Vagina (tissue), 2 donors: ENCODE measurements at regions of chr17 and their contacts with region 1.

Region 1: GRCh38 chr17:49952209-49952911 is 16.6 kb upstream of the DLX4 start:
- DNase-seq: no peak
- H3K4me3 ChIP-seq: no peak overlapping the region
- H3K27ac ChIP-seq: no peak overlapping the region
- H3K4me1 ChIP-seq: no peaks in the 10 kb centered on the region
- H3K27me3 ChIP-seq: no peaks in the 10 kb centered on the region
- CTCF ChIP-seq: peak; percentile 28 to 58 (median 45)
- POLR2A ChIP-seq: no peak

Region 2: GRCh38 chr17:49880291-49881053 is 71.9 kb before region 1 on chr17:
- intact Hi-C with region 1: loop called (anchors 5 kb)
- DNase-seq: no peak
- H3K4me3 ChIP-seq: peak overlapping the region in 1 of 2 donors; percentile 29
- H3K27ac ChIP-seq: no peak overlapping the region
- H3K4me1 ChIP-seq: no peaks in the 10 kb centered on the region
- H3K27me3 ChIP-seq: no peaks in the 10 kb centered on the region
- CTCF ChIP-seq: peak; percentile 70 to 84 (median 76)
- POLR2A ChIP-seq: no peak

Region 3: DNA sequence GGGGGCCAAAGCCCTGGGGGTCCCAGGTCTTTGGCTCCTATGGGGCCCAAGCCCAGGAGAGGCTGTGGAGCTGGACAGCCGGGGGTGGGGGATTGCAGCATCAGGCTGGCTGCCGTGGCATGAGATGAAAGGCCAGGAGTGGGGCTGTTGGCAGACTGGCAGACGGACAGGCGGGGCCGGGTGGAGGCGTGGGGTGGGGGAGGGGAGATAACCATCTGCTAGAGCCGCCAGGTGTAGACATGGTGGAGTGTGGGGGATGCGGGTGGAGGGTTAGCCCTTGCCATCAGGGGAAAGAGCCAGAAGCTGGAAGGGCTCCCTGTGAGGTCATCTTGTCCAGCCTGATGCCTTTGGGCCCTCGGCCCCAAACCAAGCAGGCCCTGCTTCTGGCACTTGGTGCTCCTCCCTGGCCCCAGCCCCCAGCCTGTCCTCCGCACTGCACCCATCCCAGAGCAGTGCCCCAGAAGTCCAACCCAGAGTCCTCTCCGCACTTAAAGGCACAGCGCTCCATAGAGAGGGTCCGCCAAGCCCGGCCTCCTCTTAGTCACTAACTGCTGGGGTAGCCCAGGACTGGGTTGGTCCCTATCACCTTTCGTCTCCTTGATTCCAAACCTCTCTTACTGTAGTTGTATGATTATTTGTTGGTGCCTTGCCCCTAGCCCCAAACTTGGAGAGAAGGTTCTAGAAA is 16.7 kb before region 1 on chr17:
- intact Hi-C with region 1: no loop called
- DNase-seq: no peak
- H3K4me3 ChIP-seq: no peak overlapping the region
- H3K27ac ChIP-seq: no peak overlapping the region
- H3K4me1 ChIP-seq: no peaks in the 10 kb centered on the region
- H3K27me3 ChIP-seq: no peaks in the 10 kb centered on the region
- CTCF ChIP-seq: no peak
- POLR2A ChIP-seq: no peak